Sigmoid colon (tissue), 7 donors: ENCODE measurements at regions of chr6 and their contacts with region 1.

Region 1: DNA sequence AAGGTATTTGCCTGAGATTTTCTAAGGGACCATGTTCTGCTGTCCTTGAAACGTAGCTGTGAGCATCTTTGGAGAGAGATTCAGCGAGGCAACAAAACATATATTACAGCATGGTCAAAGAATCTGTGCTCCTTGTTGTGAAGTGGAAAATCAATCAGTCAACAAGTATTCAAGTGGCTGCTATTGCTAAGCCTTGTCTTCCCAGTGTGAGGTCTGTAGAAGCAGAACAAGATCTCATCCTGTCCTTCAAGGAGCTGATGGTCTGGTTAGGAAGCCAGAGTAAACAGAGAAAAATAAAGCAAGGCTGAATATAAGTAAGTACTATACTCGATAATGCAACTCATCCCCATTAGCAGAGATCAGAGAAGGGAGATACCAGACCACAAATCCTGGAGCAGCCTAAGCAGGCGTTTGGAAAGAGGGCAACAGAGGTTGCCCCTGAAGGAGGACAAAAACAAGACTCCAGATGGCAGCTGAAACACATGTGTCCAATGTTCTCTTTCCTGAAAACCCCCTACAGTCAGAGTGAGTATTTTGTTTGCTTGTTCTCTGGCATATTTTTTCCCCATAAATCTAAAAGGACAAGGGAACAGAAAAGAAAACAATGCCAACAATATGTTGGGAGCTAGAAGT is 392.0 kb downstream of the SYNE1 start:
- DNase-seq: no peak
- H3K4me3 ChIP-seq: no peak overlapping the region
- H3K27ac ChIP-seq: peak overlapping the region; percentile 34 to 73 (median 58)
- H3K4me1 ChIP-seq: peaks cover 0 to 44% (median 36%) of the 10 kb centered on the region in 4 donors
- H3K27me3 ChIP-seq: no peaks in the 10 kb centered on the region
- CTCF ChIP-seq: no peak
- EP300 ChIP-seq: no peak
- POLR2A ChIP-seq: no peak

Region 2: DNA sequence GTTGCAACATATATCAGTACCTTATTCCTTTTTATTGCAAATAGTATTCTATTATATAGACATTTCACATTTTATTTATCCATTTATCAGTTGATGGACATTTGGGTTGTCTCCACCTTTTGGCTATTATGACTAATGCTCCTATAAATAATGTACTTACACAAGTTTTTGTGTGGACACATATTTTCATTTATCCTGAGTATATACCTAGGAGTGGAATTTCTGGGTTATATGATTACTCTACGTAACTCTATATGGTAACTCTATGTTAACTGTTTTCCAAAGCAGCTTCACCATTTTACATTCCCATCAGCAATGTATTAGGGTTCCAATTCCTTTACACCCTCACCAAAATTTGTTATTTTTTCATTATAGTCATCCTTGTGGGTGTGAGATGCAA is 32.7 kb before region 1 on chr6:
- intact Hi-C with region 1: loop called (anchors 5 kb)
- DNase-seq: no peak
- H3K4me3 ChIP-seq: no peak overlapping the region
- H3K27ac ChIP-seq: no peak overlapping the region
- H3K4me1 ChIP-seq: no peaks in the 10 kb centered on the region
- H3K27me3 ChIP-seq: no peaks in the 10 kb centered on the region
- CTCF ChIP-seq: no peak
- EP300 ChIP-seq: no peak
- POLR2A ChIP-seq: no peak